ENCODE measurements at regions of chr11 and their contacts with region 1.

Region 1: GRCh38 chr11:17207317-17208258 is at the start of gene PIK3C2A:
- DNase-seq: peak; percentile 91
- H3K4me3 ChIP-seq: peak within 1 kb of the TSS; percentile 62 to 99 (median 98)
- H3K27ac ChIP-seq: peak within 1 kb of the TSS; percentile 98
- H3K4me1 ChIP-seq: peaks cover 28% of the 10 kb centered on the region
- H3K27me3 ChIP-seq: no peaks in the 10 kb centered on the region
- CTCF ChIP-seq: no peak
- POLR2A ChIP-seq: peak; percentile 96
- total RNA-seq, gene PIK3C2A: 142 and 148 TPM in 2 replicates

Region 2: GRCh38 chr11:17077520-17078401 is 129.8 kb before region 1 on chr11 and contains the start of gene RPS13:
- CTCF ChIA-PET with region 1: interaction called, 3 read pairs
- POLR2A ChIA-PET with region 1: interaction called, 7 read pairs
- dilution Hi-C with region 1: no loop called
- intact Hi-C with region 1: loop called (anchors 1 kb)
- DNase-seq: peak; percentile 100
- H3K4me3 ChIP-seq: peak within 1 kb of the TSS; percentile 69 to 90 (median 83)
- H3K27ac ChIP-seq: peak within 1 kb of the TSS; percentile 76
- H3K4me1 ChIP-seq: peaks cover 14% of the 10 kb centered on the region
- H3K27me3 ChIP-seq: no peaks in the 10 kb centered on the region
- CTCF ChIP-seq: no peak
- POLR2A ChIP-seq: peak; percentile 99
- total RNA-seq, gene RPS13: 1,051 and 1,169 TPM in 2 replicates

Region 3: DNA sequence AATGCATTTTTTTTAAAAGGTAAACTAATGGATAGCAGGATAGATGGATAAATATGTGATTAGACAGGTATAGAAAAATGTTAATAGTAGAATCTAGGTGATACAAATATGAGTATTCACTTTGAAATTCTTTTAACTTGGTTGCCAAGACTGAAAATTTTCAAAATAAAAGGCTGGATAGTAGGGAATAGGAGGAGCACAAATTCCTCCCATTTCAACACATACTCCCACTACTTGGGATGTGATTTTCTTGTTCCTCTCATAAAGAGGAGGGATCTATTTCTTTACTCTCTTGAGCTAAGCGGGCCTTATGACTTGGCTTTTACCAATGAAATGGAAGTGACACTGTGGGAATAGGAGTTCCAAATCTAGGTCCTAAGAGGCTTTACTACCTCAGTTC is 35.7 kb before region 1 on chr11:
- CTCF ChIA-PET with region 1: no interaction called
- POLR2A ChIA-PET with region 1: no interaction called
- dilution Hi-C with region 1: no loop called
- intact Hi-C with region 1: loop called (anchors 1 kb)
- DNase-seq: no peak
- H3K4me3 ChIP-seq: no peak overlapping the region
- H3K27ac ChIP-seq: peak overlapping the region; percentile 59
- H3K4me1 ChIP-seq: peaks cover 14% of the 10 kb centered on the region
- H3K27me3 ChIP-seq: no peaks in the 10 kb centered on the region
- CTCF ChIP-seq: no peak
- POLR2A ChIP-seq: no peak

Region 4: GRCh38 chr11:17230867-17231851 is 23.6 kb after region 1 on chr11:
- CTCF ChIA-PET with region 1: interaction called, 19 read pairs
- POLR2A ChIA-PET with region 1: interaction called, 5 read pairs
- dilution Hi-C with region 1: no loop called
- intact Hi-C with region 1: no loop called
- DNase-seq: no peak
- H3K4me3 ChIP-seq: no peak overlapping the region
- H3K27ac ChIP-seq: no peak overlapping the region
- H3K4me1 ChIP-seq: peaks cover 3% of the 10 kb centered on the region
- H3K27me3 ChIP-seq: no peaks in the 10 kb centered on the region
- CTCF ChIP-seq: no peak
- POLR2A ChIP-seq: no peak